AG04449 (cell line): ENCODE measurements at regions of chr1 and their contacts with region 1.

Region 1: GRCh38 chr1:174761901-174762585 is 237.7 kb upstream of the CACYBP start:
- DNase-seq: no peak
- H3K4me3 ChIP-seq: no peak overlapping the region
- CTCF ChIP-seq: no peak

Region 2: DNA sequence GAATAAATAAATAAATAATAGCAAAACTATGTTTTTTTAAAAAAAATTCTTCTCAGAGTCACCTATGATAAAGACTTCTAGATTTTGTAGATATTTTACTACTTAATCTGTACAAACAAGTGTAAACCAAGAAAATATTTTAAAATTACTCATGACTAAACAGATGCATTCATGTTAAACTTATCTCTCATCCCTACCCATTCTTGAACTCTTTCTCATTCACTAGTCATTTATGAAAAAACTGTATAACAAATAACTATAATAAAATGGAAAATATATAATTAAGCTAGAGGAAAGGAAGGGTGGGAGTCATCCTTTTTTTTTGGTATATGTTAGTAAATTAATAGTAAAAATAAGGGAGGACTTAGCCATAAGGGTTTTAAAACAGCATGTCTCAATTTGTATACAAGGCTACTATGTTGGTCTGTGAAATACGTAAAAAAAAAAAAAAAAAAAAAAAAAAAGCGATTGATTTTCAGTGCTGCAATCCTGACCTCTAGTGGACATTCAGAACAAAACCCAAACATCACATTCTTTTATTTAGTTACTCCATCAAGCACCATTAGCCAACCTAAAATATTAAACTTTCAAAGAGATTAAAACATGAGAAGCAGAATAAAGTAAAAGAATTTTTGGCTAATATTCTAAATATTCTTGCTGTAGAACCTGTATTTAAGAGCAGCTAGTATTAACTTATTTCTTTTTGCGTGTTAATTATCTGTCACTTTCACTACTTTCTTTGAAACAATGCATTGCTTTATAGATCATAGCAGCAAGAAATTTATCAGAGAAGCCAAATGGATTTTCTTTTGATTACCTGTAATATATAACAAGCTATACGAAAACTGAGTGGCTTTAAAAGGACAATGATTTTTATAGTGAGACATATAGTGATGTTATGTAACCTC is 18.1 kb before region 1 on chr1:
- CTCF ChIA-PET with region 1: interaction called, 10 read pairs
- POLR2A ChIA-PET with region 1: no interaction called
- DNase-seq: no peak
- H3K4me3 ChIP-seq: no peak overlapping the region
- CTCF ChIP-seq: peak; percentile 18